Activated T-helper 2 cell treated with anti-CD3 and anti-CD28 coated beads, Interferon-gamma antibody, Interleukin-2, Interleukin-4, amounts not matched to agents 10 μg/mL and 5 μg/mL and 100 μg/mL, durations not matched to agents 14 hours and 24 hours and 36 hours (primary cell): ENCODE measurements at regions of chr3 and their contacts with region 1.

Region 1: GRCh38 chr3:101561630-101562328 is at the start of gene TRMT10C:
- DNase-seq: peak; percentile 89
- H3K4me3 Mint-ChIP-seq: peak within 1 kb of the TSS; percentile 97
- H3K27ac Mint-ChIP-seq: peak within 1 kb of the TSS; percentile 97
- H3K4me1 Mint-ChIP-seq: peaks cover 26% of the 10 kb centered on the region
- H3K27me3 Mint-ChIP-seq: peaks cover 1% of the 10 kb centered on the region
- total RNA-seq, gene TRMT10C: 47.1 and 54.0 TPM in 2 replicates

Region 2: DNA sequence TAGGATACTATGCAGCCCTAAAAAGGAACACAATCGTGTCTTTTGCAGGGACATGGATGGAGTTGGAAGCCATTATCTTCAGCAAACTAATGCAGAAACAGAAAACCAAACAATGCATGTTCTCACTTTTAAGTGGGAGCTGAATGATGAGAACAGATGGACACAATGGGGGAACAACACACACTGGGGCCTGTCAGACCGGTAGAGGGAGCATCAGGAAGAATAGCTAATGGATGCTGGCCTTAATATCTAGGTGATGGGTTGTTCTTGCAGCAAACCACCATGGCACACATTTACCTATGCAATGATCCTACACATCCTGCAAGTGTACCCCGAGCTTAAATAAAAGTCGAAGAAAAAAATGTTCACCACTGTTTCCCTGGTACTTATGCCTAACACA is 66.2 kb before region 1 on chr3:
- intact Hi-C with region 1: no loop called
- DNase-seq: no peak
- H3K4me3 Mint-ChIP-seq: no peak overlapping the region
- H3K27ac Mint-ChIP-seq: no peak overlapping the region
- H3K4me1 Mint-ChIP-seq: no peaks in the 10 kb centered on the region
- H3K27me3 Mint-ChIP-seq: no peaks in the 10 kb centered on the region

Region 3: GRCh38 chr3:101518421-101518871 is 43.3 kb before region 1 on chr3:
- intact Hi-C with region 1: loop called (anchors 1 kb)
- DNase-seq: peak; percentile 55
- H3K4me3 Mint-ChIP-seq: peak overlapping the region; percentile 53
- H3K27ac Mint-ChIP-seq: peak overlapping the region; percentile 85
- H3K4me1 Mint-ChIP-seq: peaks cover 39% of the 10 kb centered on the region
- H3K27me3 Mint-ChIP-seq: no peaks in the 10 kb centered on the region

Region 4: GRCh38 chr3:101544161-101544850 is 17.5 kb before region 1 on chr3:
- intact Hi-C with region 1: loop called (anchors 1 kb)
- DNase-seq: no peak
- H3K4me3 Mint-ChIP-seq: peak overlapping the region; percentile 2
- H3K27ac Mint-ChIP-seq: peak overlapping the region; percentile 27
- H3K4me1 Mint-ChIP-seq: peaks cover 34% of the 10 kb centered on the region
- H3K27me3 Mint-ChIP-seq: peaks cover 4% of the 10 kb centered on the region

Region 5: GRCh38 chr3:101573449-101574387 is 11.9 kb after region 1 on chr3 and contains the start of gene PCNP:
- intact Hi-C with region 1: loop called (anchors 1 kb)
- DNase-seq: peak; percentile 99
- H3K4me3 Mint-ChIP-seq: peak within 1 kb of the TSS; percentile 96
- H3K27ac Mint-ChIP-seq: peak within 1 kb of the TSS; percentile 99
- H3K4me1 Mint-ChIP-seq: peaks cover 56% of the 10 kb centered on the region
- H3K27me3 Mint-ChIP-seq: no peaks in the 10 kb centered on the region
- total RNA-seq, gene PCNP: 190 and 192 TPM in 2 replicates